Ascending aorta (tissue), 2 donors: ENCODE measurements at regions of chr9 and their contacts with region 1.

Region 1: DNA sequence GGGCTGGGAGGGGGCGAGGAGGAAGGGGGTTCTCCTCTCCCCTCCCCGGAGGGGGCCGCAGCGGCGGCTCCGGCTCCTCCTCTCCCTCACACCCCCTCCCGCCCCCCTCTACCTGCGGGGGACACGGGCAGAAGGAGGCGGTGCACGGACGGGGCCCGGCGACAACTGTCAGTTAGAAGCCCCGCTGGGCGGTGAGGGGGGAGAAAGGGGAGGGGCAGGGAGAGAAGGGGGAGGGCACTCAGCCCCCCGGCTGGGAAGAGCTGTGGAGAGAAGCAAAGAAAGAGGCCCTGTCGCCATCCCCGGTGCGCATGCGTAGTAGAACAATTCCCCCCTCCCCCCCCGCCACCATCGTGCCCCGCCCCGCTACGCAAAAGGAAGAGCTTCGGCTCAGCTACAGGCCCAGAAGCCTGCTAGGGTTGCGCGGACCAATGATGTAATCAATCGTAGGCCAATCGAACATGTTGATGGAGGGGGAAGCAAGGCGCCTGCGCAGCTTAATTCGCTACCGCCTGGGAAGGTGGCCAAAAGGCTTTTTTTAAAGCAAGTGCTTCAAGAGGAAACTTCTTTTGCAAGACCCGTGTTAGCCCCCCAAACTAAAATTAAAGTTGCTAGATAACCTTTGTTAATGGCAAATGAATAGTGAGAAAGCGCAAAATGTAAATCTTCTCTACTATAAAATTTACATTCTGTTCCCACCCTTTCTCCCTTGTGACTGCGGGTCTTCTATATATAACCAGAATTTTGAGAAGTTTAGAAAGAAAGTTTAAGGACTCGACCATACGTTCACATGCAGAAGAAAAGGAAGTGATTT is 7.0 kb downstream of the RANBP6 start:
- DNase-seq: peak; percentile 91 to 98
- H3K4me3 ChIP-seq: peak overlapping the region; percentile 85 to 97
- H3K27ac ChIP-seq: peak overlapping the region; percentile 97
- H3K4me1 ChIP-seq: peaks cover 0 to 17% of the 10 kb centered on the region in 2 donors
- H3K27me3 ChIP-seq: no peaks in the 10 kb centered on the region
- CTCF ChIP-seq: no peak

Region 2: DNA sequence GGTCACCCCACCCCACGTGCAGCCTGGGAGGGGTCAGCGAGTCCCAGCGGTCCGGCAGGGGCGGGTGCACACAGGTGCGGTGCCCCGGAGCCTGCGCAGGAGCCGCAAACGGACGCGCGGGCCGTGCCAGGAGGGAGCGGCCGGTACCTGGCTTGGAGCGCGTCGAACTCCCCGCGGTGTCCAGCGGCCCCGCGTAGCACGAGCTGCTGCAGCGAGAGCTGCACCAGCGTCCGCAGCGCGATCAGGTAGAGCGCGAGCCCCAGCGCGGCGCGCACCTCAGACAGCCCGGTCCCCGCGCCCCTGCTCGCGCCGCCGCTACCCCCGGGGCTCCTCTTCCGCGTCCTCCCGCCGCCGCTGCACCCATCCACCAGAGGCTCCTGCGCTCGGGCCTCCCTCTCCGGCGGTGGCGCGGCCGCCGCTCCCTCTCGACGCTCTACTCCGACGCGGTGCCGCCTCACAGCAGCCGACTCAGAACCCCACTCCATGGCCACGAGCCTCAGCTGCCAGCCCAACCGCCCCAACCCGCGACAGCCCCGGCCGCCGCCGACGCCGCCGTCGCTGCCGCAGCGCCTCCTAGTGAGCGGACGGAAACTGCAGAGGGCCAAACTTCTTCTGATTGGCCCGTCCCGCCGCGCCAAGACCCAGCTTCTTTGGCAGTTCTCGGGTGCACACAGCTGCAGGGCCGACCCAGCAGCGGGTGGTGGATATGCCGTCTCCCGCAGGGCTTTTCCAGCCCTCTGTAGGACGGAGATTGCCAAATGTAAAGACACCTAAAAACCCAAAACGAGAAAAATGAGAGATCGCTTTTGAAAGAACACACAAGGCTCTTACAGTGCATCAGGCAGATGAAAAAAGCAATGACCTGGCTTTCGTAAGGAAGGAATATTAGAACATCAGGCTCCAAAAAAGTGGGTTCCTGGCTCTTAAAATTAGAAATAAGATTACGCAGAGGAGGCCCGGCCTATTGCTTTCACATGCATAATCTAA is 175.5 kb before region 1 on chr9 and contains the start of gene ERMP1:
- intact Hi-C with region 1: loop called (anchors 5 kb)
- DNase-seq: peak; percentile 34 to 92
- H3K4me3 ChIP-seq: peak within 1 kb of the TSS; percentile 83 to 85
- H3K27ac ChIP-seq: peak within 1 kb of the TSS; percentile 66 to 67
- H3K4me1 ChIP-seq: peaks cover 6 to 12% of the 10 kb centered on the region in 2 donors
- H3K27me3 ChIP-seq: no peaks in the 10 kb centered on the region
- CTCF ChIP-seq: peak; percentile 83 to 92 (median 84)
- total RNA-seq, gene ERMP1: 4.8 TPM

Region 3: GRCh38 chr9:6215562-6215961 is 207.2 kb after region 1 on chr9 and contains the start of gene IL33:
- intact Hi-C with region 1: loop called (anchors 5 kb)
- DNase-seq: no peak
- H3K4me3 ChIP-seq: peak within 1 kb of the TSS; percentile 44 to 53
- H3K27ac ChIP-seq: peak within 1 kb of the TSS; percentile 41 to 77
- H3K4me1 ChIP-seq: peaks cover 0 to 19% of the 10 kb centered on the region in 2 donors
- H3K27me3 ChIP-seq: no peaks in the 10 kb centered on the region
- CTCF ChIP-seq: no peak
- total RNA-seq, gene IL33: 38.0 TPM

Region 4: GRCh38 chr9:6566409-6567139 is 558.2 kb after region 1 on chr9:
- intact Hi-C with region 1: loop called (anchors 10 kb)
- DNase-seq: peak; percentile 40 to 88
- H3K4me3 ChIP-seq: peak overlapping the region in 1 of 2 donors; percentile 27
- H3K27ac ChIP-seq: peak overlapping the region; percentile 72 to 84
- H3K4me1 ChIP-seq: peaks cover 0 to 14% of the 10 kb centered on the region in 2 donors
- H3K27me3 ChIP-seq: no peaks in the 10 kb centered on the region
- CTCF ChIP-seq: no peak

Region 5: GRCh38 chr9:6757456-6758247 is 749.3 kb after region 1 on chr9 and contains the start of gene KDM4C:
- intact Hi-C with region 1: loop called (anchors 5 kb)
- DNase-seq: peak; percentile 88 to 98
- H3K4me3 ChIP-seq: peak within 1 kb of the TSS; percentile 66 to 98
- H3K27ac ChIP-seq: peak within 1 kb of the TSS; percentile 98 to 99
- H3K4me1 ChIP-seq: peaks cover 3 to 4% of the 10 kb centered on the region in 2 donors
- H3K27me3 ChIP-seq: no peaks in the 10 kb centered on the region
- CTCF ChIP-seq: no peak
- total RNA-seq, gene KDM4C: 12.7 TPM